ENCODE measurements at regions of chr16 and their contacts with region 1.

Region 1: GRCh38 chr16:84754353-84754856 is 54.6 kb downstream of the USP10 start:
- DNase-seq: peak; percentile 80
- H3K4me3 ChIP-seq: no peak overlapping the region
- H3K27ac ChIP-seq: no peak overlapping the region
- H3K27me3 ChIP-seq: no peaks in the 10 kb centered on the region
- CTCF ChIP-seq: peak; percentile 77

Region 2: GRCh38 chr16:84738255-84739038 is 16.0 kb before region 1 on chr16:
- CTCF ChIA-PET with region 1: interaction called, 50 read pairs
- POLR2A ChIA-PET with region 1: interaction called, 3 read pairs
- DNase-seq: peak; percentile 26
- H3K4me3 ChIP-seq: no peak overlapping the region
- H3K27ac ChIP-seq: no peak overlapping the region
- H3K27me3 ChIP-seq: no peaks in the 10 kb centered on the region
- CTCF ChIP-seq: peak; percentile 84

Region 3: DNA sequence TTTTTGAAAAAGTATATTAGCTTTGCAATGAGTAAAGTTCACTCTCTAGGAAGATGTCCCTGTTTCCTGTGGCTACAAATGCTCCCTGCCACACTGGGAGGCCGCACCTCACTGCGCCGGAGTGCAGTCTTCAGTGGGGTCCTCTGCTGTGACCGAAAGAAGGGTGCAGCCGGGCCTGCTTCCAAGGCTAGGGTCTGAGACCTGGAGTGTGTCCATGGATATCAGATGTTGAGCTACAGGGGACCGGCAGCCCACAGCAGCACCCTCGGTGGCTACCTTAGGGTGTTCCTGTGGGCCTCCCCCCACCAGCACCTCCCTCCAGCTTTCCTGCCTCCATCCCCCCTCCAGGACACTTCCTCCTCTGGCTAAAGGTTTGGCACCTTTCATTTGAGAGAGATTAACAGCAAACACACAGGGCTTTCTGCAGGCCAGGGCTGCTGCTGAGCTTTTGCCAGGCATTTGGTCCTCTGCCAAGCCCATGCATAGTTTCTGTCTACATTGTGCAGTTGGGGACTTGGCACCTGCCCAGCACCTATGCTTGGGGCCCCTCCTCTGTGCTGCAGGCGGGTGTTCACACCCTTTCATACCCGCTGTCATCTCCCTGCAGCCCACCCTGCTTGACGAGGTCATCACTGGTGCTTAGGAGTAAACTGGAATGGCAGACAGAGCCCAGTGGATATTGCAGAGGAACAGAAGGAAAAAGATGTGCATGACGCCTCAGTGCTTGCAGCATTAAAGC is 31.6 kb after region 1 on chr16:
- CTCF ChIA-PET with region 1: no interaction called
- POLR2A ChIA-PET with region 1: no interaction called
- DNase-seq: no peak
- H3K4me3 ChIP-seq: no peak overlapping the region
- H3K27ac ChIP-seq: peak overlapping the region; percentile 11
- H3K27me3 ChIP-seq: no peaks in the 10 kb centered on the region
- CTCF ChIP-seq: no peak

Region 4: DNA sequence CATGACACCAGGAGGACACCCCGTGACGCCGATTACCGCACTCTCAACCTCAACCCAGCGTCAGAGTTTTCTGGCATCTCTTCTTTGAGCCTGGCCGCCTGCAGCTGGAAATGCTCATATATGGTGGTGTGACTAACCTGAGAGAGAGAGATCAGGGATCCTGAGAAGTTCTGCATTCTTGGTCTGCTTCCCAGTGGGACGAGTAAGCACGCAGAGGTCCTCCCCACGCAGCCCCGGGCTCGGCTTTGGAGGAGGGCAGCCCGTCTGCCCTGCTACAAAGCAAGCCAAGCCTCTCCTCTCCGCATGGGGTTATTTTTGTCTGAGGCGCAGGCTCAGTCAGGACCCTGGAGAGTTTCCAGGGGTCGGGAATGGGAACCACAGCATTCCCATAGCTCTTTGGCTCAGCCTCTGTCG is 81.8 kb after region 1 on chr16:
- CTCF ChIA-PET with region 1: interaction called, 14 read pairs
- POLR2A ChIA-PET with region 1: interaction called, 3 read pairs
- DNase-seq: peak; percentile 100
- H3K4me3 ChIP-seq: no peak overlapping the region
- H3K27ac ChIP-seq: peak overlapping the region; percentile 96
- H3K27me3 ChIP-seq: no peaks in the 10 kb centered on the region
- CTCF ChIP-seq: no peak

Region 5: GRCh38 chr16:84881702-84882521 is 127.5 kb after region 1 on chr16:
- CTCF ChIA-PET with region 1: interaction called, 25 read pairs
- POLR2A ChIA-PET with region 1: interaction called, 6 read pairs
- DNase-seq: peak; percentile 85
- H3K4me3 ChIP-seq: no peak overlapping the region
- H3K27ac ChIP-seq: peak overlapping the region; percentile 80
- H3K27me3 ChIP-seq: no peaks in the 10 kb centered on the region
- CTCF ChIP-seq: no peak

Region 6: GRCh38 chr16:84933774-84934631 is 179.6 kb after region 1 on chr16:
- CTCF ChIA-PET with region 1: interaction called, 10 read pairs
- POLR2A ChIA-PET with region 1: no interaction called
- DNase-seq: no peak
- H3K4me3 ChIP-seq: no peak overlapping the region
- H3K27ac ChIP-seq: no peak overlapping the region
- H3K27me3 ChIP-seq: no peaks in the 10 kb centered on the region
- CTCF ChIP-seq: no peak

Region 7: GRCh38 chr16:84963066-84963465 is 208.7 kb after region 1 on chr16:
- CTCF ChIA-PET with region 1: interaction called, 186 read pairs
- POLR2A ChIA-PET with region 1: no interaction called
- DNase-seq: no peak
- H3K4me3 ChIP-seq: no peak overlapping the region
- H3K27ac ChIP-seq: no peak overlapping the region
- H3K27me3 ChIP-seq: peaks cover 2% of the 10 kb centered on the region
- CTCF ChIP-seq: no peak

Region 8: DNA sequence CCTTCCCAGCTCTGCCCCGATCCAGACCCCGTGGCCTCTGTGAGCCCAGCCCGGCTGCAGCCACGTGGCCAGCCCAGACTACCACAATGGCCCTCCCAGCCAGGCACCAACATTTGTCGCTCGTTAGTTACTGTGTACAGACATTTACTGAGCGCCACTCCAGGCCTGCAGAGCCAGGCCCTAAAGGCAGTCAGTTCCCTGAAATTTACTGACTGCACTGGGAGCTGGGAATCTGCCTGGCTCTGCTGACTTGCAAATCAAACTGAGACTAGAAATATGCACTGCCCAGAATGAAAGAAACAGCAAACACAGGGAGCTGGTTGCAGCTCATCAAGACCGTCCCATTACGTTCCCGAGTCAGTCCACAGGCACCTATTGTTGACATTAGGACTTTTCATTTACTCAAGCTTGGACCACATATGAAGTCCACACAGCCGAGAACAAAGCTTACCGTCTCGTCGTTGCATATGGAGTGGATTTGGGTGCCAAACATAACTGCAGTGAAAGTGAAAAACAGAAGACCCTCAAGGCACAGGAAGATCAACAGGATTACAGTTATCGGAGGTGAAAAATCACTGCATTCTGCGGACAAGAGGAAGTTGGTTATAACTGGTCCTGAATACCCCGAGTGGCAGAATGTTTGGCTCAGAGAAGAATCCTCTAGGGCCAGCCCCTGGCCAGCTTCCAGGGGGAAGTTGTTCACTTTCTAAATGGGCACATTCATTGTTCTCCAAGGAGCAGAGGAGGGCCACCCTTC is 222.4 kb after region 1 on chr16:
- CTCF ChIA-PET with region 1: interaction called, 186 read pairs
- POLR2A ChIA-PET with region 1: interaction called, 4 read pairs
- DNase-seq: no peak
- H3K4me3 ChIP-seq: no peak overlapping the region
- H3K27ac ChIP-seq: peak overlapping the region; percentile 61
- H3K27me3 ChIP-seq: no peaks in the 10 kb centered on the region
- CTCF ChIP-seq: no peak

Measured in AG04450 (cell line).